CD8-positive, alpha-beta T cell (primary cell): ENCODE measurements at regions of chr7 and their contacts with region 1.

Region 1: DNA sequence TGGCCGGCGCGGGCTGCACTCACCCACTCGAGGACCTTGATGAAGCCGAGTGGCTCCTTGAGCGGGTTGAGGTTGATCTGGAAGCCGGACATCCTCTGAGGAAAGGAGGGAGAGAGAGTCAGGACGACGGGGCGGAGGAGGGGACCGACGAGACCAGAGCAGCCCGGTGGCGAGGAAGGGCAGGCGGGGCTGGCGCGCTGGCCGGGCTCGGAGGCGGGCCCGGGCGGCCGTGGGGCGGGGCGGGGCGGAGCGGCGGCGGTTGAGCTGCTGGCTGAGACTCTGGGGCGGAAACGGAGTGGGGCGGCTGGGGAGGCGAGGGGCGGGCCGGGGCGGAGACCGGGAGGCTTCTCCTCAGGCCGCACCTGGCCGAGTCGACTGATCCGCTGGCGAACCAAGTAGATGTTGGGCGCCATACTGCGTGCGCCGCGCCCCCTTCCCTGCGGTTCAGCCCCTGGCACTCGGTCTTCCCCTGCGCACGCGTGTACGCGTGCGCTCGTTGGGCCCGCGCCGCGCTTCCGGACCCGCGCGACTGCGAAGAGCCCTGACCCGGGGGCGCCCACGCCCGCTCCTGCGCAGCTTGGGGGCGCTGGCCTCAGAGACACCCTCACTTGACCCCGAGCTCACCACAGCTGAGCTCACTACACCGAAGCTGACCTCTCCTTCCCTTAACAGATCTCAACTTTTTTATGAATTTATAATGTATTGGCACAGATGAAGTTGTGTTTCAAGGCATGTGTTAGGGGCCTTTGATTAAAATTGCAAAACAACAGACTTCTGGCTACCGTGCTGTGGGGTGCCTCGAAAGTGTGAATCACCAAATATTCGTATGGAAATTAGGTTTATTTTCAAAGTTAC is at the start of gene SYPL1:
- DNase-seq: peak; percentile 86 to 97 (median 95)
- ATAC-seq: peak; percentile 88
- H3K4me3 ChIP-seq: peak within 1 kb of the TSS; percentile 64 to 69
- H3K4me3 Mint-ChIP-seq: peak within 1 kb of the TSS; percentile 89
- H3K27ac ChIP-seq: peak within 1 kb of the TSS; percentile 84 to 85
- H3K27ac Mint-ChIP-seq: peak within 1 kb of the TSS; percentile 96
- H3K4me1 ChIP-seq: peaks cover 71% of the 10 kb centered on the region
- H3K4me1 Mint-ChIP-seq: peaks cover 72% of the 10 kb centered on the region
- H3K27me3 ChIP-seq: no peaks in the 10 kb centered on the region
- H3K27me3 Mint-ChIP-seq: no peaks in the 10 kb centered on the region
- CTCF ChIP-seq: no peak
- total RNA-seq, gene SYPL1: 50.0 to 51.2 TPM

Region 2: GRCh38 chr7:105531792-105532671 is 580.3 kb before region 1 on chr7 and contains the start of gene RINT1:
- CTCF ChIA-PET with region 1: no interaction called
- POLR2A ChIA-PET with region 1: interaction called, 3 read pairs
- intact Hi-C with region 1: loop called (anchors 5 to 10 kb)
- DNase-seq: peak; percentile 84 to 94 (median 87)
- ATAC-seq: peak; percentile 91
- H3K4me3 ChIP-seq: peak within 1 kb of the TSS; percentile 90 to 93
- H3K4me3 Mint-ChIP-seq: peak within 1 kb of the TSS; percentile 94
- H3K27ac ChIP-seq: peak within 1 kb of the TSS; percentile 75 to 85
- H3K27ac Mint-ChIP-seq: peak within 1 kb of the TSS; percentile 96
- H3K4me1 ChIP-seq: peaks cover 15% of the 10 kb centered on the region
- H3K4me1 Mint-ChIP-seq: peaks cover 43% of the 10 kb centered on the region
- H3K27me3 ChIP-seq: no peaks in the 10 kb centered on the region
- H3K27me3 Mint-ChIP-seq: no peaks in the 10 kb centered on the region
- CTCF ChIP-seq: peak; percentile 57
- total RNA-seq, gene RINT1: 46.3 to 50.8 TPM

Region 3: DNA sequence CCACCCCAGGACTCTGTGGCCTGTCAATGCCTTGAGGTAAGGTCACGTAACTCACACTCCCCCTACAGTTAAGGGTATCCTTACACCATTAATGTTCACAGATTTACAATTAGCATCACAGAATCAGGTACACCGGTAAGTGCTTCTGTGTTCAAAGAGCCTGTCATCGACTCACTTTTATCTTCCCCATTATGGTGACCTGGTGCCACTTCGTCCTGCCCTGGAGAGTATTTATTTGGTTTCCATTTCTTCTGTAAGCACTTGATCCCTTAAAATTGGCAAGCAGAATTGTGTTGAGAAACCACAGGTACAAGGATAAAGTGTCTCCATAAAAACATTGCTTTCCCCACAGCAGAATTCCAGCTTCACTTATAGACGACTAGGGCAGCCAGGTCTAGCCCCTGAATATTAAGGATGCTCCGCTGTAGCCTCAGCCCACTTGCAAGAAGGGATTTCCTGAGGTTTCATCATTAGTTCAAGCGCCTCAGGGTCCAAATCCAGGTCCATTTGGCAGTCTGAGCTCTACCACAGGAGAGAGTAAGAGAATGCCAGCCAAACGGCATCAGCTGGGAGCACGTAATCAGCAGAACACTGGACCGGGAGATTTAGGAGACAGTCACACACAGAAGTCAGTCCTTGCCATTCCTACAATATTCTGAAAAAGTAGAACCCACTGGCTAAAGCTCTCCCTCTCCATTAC is 246.1 kb before region 1 on chr7:
- CTCF ChIA-PET with region 1: no interaction called
- POLR2A ChIA-PET with region 1: no interaction called
- intact Hi-C with region 1: no loop called
- DNase-seq: no peak
- ATAC-seq: no peak
- H3K4me3 ChIP-seq: no peak overlapping the region
- H3K4me3 Mint-ChIP-seq: no peak overlapping the region
- H3K27ac ChIP-seq: no peak overlapping the region
- H3K27ac Mint-ChIP-seq: no peak overlapping the region
- H3K4me1 ChIP-seq: no peaks in the 10 kb centered on the region
- H3K4me1 Mint-ChIP-seq: peaks cover 8% of the 10 kb centered on the region
- H3K27me3 ChIP-seq: no peaks in the 10 kb centered on the region
- H3K27me3 Mint-ChIP-seq: no peaks in the 10 kb centered on the region
- CTCF ChIP-seq: no peak

Region 4: DNA sequence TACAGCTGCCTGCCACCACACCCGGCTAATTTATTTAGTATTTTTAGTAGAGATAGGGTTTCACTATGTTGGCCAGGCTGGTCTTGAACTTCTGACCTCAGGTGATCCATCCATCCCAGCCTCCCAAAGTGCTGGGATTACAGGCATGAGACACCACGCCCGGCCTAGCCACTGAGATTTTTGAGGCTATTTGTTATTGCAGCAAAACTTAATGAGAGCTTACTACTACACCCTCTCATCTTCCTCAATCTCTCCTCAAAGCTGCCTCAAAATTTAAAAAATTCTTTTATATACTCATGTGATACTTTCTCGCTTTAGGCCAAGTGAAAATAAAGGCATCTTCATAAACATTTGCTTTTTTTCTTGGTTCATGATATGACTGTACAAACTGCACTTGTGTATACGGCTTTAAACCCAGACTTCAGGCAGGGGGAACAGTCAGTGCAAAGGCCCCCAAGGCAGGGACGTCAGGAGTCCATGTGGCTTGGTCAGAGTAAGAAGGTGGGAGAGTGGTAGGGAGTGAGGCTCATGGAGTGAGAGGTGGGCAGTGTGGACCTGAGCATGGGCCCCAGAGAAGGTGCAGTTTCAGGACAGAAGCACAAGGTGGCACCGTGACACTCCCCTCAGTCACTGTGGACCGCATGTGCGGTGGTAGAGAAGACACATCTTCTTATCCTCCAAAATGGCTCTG is 55.7 kb before region 1 on chr7:
- CTCF ChIA-PET with region 1: interaction called, 14 read pairs
- POLR2A ChIA-PET with region 1: interaction called, 4 read pairs
- intact Hi-C with region 1: loop called (anchors 5 kb)
- DNase-seq: peak; percentile 32 to 84 (median 71)
- ATAC-seq: peak; percentile 99
- H3K4me3 ChIP-seq: no peak overlapping the region
- H3K4me3 Mint-ChIP-seq: no peak overlapping the region
- H3K27ac ChIP-seq: no peak overlapping the region
- H3K27ac Mint-ChIP-seq: no peak overlapping the region
- H3K4me1 ChIP-seq: peaks cover 19% of the 10 kb centered on the region
- H3K4me1 Mint-ChIP-seq: peaks cover 26% of the 10 kb centered on the region
- H3K27me3 ChIP-seq: no peaks in the 10 kb centered on the region
- H3K27me3 Mint-ChIP-seq: no peaks in the 10 kb centered on the region
- CTCF ChIP-seq: peak; percentile 79

Region 5: DNA sequence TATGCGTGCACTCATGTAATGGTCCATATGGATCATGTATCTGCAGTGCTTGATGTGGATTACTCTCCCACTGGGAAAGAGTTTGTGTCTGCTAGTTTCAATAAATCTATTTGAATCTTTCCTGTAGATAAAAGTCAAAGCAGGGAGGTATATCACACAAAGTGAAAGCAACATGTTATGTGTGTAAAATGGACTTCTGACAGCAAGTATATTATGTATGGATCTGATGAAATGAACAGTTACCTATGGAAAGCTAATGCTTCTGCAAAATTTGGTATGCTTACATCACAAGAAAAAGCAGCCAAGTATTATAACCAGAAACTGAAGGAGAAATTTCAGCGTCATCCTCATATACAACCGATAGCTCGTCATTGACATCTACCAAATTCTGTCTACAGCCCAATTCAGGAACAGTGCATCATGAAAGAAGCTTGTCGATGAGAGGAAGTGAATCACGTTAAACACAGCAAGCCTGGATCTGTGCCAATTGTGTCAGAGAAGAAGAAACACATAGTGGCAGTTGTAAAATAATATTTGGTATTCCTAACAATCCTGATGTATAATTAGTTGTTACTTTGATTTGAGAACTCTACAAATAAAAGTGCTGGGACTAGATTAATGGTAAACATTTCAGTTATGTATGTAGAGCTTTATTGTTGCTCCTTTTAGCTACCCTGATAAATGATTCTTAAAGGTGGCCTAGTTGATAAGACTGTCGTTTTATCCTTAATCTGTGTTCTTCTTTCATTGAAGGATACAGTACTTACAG is 14.0 kb after region 1 on chr7:
- CTCF ChIA-PET with region 1: interaction called, 7 read pairs
- POLR2A ChIA-PET with region 1: interaction called, 13 read pairs
- intact Hi-C with region 1: loop called in 1 of 2 experiments (anchors 2 kb)
- DNase-seq: peak in 8 of 9 experiments; percentile 6 to 63 (median 54)
- ATAC-seq: peak; percentile 89
- H3K4me3 ChIP-seq: no peak overlapping the region
- H3K4me3 Mint-ChIP-seq: peak overlapping the region; percentile 54
- H3K27ac ChIP-seq: no peak overlapping the region
- H3K27ac Mint-ChIP-seq: peak overlapping the region; percentile 8
- H3K4me1 ChIP-seq: peaks cover 10% of the 10 kb centered on the region
- H3K4me1 Mint-ChIP-seq: peaks cover 16% of the 10 kb centered on the region
- H3K27me3 ChIP-seq: no peaks in the 10 kb centered on the region
- H3K27me3 Mint-ChIP-seq: peaks cover 2% of the 10 kb centered on the region
- CTCF ChIP-seq: no peak

Region 6: GRCh38 chr7:107044347-107045194 is 932.2 kb after region 1 on chr7 and contains the start of gene PRKAR2B:
- CTCF ChIA-PET with region 1: no interaction called
- POLR2A ChIA-PET with region 1: no interaction called
- intact Hi-C with region 1: loop called (anchors 5 to 10 kb)
- DNase-seq: peak; percentile 55 to 91 (median 80)
- ATAC-seq: peak; percentile 93
- H3K4me3 ChIP-seq: peak within 1 kb of the TSS; percentile 50 to 58
- H3K4me3 Mint-ChIP-seq: peak within 1 kb of the TSS; percentile 86
- H3K27ac ChIP-seq: no peak within 1 kb of the TSS
- H3K27ac Mint-ChIP-seq: no peak within 1 kb of the TSS
- H3K4me1 ChIP-seq: peaks cover 13% of the 10 kb centered on the region
- H3K4me1 Mint-ChIP-seq: peaks cover 10% of the 10 kb centered on the region
- H3K27me3 ChIP-seq: peaks cover 7% of the 10 kb centered on the region in 2 experiments
- H3K27me3 Mint-ChIP-seq: peaks cover 7% of the 10 kb centered on the region
- CTCF ChIP-seq: no peak
- total RNA-seq, gene PRKAR2B: 0.33 to 0.60 TPM

Region 7: DNA sequence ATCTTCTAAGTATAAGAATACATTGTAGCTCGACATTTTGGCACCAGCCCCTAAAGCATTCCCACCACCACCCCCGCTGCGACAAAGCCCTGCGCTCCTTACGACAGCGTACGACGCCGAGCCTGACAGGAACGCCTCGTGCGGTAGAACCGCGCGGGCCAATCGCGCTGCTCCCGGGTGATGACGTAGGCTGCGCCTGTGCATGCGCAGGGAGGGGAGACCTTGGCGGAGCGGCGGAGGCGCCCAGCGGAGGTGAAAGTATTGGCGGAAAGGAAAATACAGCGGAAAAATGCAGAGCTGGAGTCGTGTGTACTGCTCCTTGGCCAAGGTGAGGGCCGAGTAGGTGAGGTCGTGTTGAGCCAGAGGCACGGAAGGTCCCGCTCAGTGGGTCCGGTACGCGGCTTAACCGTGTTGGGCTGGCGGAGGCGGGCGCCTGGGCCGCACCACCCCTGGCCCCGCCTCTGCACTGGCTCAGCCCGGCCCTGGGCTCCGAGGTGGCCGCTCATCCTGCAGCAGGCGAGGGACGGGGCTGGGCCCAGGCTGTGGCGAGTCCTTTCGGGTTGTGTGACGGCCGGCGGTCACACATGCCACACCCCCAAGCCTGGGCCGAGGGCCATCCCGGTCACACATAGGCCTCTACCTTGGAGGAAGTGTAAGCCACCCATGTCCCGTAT is 1778.8 kb after region 1 on chr7 and contains the start of gene DLD:
- CTCF ChIA-PET with region 1: no interaction called
- POLR2A ChIA-PET with region 1: no interaction called
- intact Hi-C with region 1: loop called in 1 of 2 experiments (anchors 5 kb)
- DNase-seq: peak; percentile 86 to 97 (median 93)
- ATAC-seq: peak; percentile 97
- H3K4me3 ChIP-seq: peak within 1 kb of the TSS; percentile 79 to 86
- H3K4me3 Mint-ChIP-seq: peak within 1 kb of the TSS; percentile 98
- H3K27ac ChIP-seq: peak within 1 kb of the TSS; percentile 88 to 94
- H3K27ac Mint-ChIP-seq: peak within 1 kb of the TSS; percentile 98
- H3K4me1 ChIP-seq: peaks cover 48% of the 10 kb centered on the region
- H3K4me1 Mint-ChIP-seq: peaks cover 48% of the 10 kb centered on the region
- H3K27me3 ChIP-seq: no peaks in the 10 kb centered on the region
- H3K27me3 Mint-ChIP-seq: no peaks in the 10 kb centered on the region
- CTCF ChIP-seq: no peak
- total RNA-seq, gene DLD: 83.5 to 85.9 TPM